GM12878 (cell line): ENCODE measurements at regions of chr14 and their contacts with region 1.

Region 1: GRCh38 chr14:77028384-77029231 is at the start of gene IRF2BPL:
- DNase-seq: peak; percentile 87
- ATAC-seq: peak; percentile 61
- H3K4me3 ChIP-seq: peak within 1 kb of the TSS; percentile 81
- H3K27ac ChIP-seq: peak within 1 kb of the TSS; percentile 98
- H3K4me1 ChIP-seq: peaks cover 38% of the 10 kb centered on the region
- H3K27me3 ChIP-seq: no peaks in the 10 kb centered on the region
- CTCF ChIP-seq: no peak
- EP300 ChIP-seq: peak in 1 of 2 experiments; percentile 29; a peak in 2 of 4 replicates
- POLR2A ChIP-seq: peak; percentile 83
- RAD21 ChIP-seq: no peak
- polyA plus RNA-seq, gene IRF2BPL: 1.2 to 1.9 TPM

Region 2: GRCh38 chr14:76282581-76282980 is 746.0 kb before region 1 on chr14:
- CTCF ChIA-PET with region 1: no interaction called
- POLR2A ChIA-PET with region 1: no interaction called
- RAD21 ChIA-PET with region 1: no interaction called
- SMC1A ChIA-PET with region 1: no interaction called
- in situ Hi-C with region 1: no loop called
- intact Hi-C with region 1: no loop called
- DNase-seq: no peak
- ATAC-seq: no peak
- H3K4me3 ChIP-seq: no peak overlapping the region
- H3K27ac ChIP-seq: no peak overlapping the region
- H3K4me1 ChIP-seq: no peaks in the 10 kb centered on the region
- H3K27me3 ChIP-seq: no peaks in the 10 kb centered on the region
- CTCF ChIP-seq: no peak
- EP300 ChIP-seq: no peak
- POLR2A ChIP-seq: no peak
- RAD21 ChIP-seq: no peak

Region 3: DNA sequence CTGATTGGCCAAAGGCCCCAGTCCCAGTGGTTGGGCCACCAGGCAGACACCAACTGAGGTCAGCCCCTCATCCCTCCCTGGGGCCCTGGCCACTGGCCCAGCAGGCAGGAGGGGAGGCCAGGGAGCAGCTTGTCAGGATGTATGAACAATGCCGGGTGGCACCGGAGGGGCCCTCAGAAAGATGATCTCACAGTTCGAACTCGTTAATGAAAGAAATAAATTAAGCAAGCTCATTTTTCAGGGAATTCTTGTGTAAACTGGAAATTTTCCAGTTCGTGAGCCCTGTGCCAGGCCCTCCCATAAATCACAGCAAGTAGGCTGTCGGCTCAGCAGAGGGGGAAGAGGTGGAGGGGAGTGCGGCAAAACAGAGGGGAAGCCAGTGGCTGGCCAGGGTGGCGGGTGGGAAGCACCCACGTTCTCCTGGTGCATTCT is 444.3 kb before region 1 on chr14:
- CTCF ChIA-PET with region 1: no interaction called
- POLR2A ChIA-PET with region 1: no interaction called
- RAD21 ChIA-PET with region 1: no interaction called
- SMC1A ChIA-PET with region 1: no interaction called
- in situ Hi-C with region 1: no loop called
- intact Hi-C with region 1: no loop called
- DNase-seq: no peak
- ATAC-seq: no peak
- H3K4me3 ChIP-seq: no peak overlapping the region
- H3K27ac ChIP-seq: no peak overlapping the region
- H3K4me1 ChIP-seq: no peaks in the 10 kb centered on the region
- H3K27me3 ChIP-seq: peaks cover 0 to 2% of the 10 kb centered on the region in 2 experiments; a peak in 1 of 4 replicates
- CTCF ChIP-seq: no peak
- EP300 ChIP-seq: no peak
- POLR2A ChIP-seq: no peak
- RAD21 ChIP-seq: no peak

Region 4: DNA sequence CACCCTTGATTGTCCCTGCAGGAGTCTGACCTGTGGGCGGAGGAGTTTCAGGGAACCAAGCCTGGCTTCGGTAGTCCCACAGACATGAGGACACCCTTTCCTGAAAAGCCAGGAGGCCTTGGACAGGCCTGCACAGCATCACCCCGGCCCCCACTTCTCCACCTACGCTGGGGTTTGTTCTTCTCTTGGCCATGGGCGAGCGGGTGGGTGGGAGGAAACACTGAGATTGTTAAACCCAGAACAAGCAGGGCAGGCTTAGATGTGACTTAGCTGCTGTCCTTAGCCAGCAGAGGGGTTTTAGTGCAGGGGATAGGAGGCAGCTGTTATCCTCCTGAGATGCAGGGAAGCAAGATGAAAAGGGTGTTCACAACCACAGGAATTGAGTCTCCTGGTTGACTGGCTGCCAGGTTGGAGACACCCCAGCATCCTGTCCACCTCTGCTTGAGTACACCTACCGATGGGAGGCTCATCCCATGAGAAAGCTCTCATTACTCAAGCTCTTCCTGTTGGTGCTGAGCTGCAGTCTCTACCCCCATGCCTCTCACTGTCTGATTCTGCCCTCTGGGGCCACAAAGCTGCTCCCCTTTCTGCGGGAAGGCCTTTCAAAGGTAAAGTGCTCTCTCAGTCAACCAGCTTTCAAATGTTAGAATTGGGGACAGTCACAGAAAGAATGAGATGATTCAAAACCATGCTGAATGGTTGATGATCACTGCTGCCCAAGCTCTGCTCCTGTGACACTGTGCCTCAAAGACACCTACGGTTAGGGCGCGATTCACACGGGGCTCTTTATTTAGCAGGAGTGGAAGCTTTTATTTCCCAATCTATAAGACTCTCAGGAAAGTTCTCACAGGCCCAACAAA is 86.4 kb before region 1 on chr14:
- CTCF ChIA-PET with region 1: interaction called, 14 read pairs
- POLR2A ChIA-PET with region 1: interaction called, 12 read pairs
- RAD21 ChIA-PET with region 1: interaction called, 20 read pairs
- SMC1A ChIA-PET with region 1: interaction called, 9 read pairs
- in situ Hi-C with region 1: no loop called
- intact Hi-C with region 1: no loop called
- DNase-seq: peak; percentile 72
- ATAC-seq: peak; percentile 29
- H3K4me3 ChIP-seq: no peak overlapping the region
- H3K27ac ChIP-seq: no peak overlapping the region
- H3K4me1 ChIP-seq: peaks cover 21% of the 10 kb centered on the region
- H3K27me3 ChIP-seq: no peaks in the 10 kb centered on the region
- CTCF ChIP-seq: no peak; a peak in 1 of 6 replicates
- EP300 ChIP-seq: no peak
- POLR2A ChIP-seq: no peak
- RAD21 ChIP-seq: no peak

Region 5: GRCh38 chr14:76956316-76957090 is 72.1 kb before region 1 on chr14:
- CTCF ChIA-PET with region 1: interaction called, 22 read pairs
- POLR2A ChIA-PET with region 1: interaction called, 48 read pairs
- RAD21 ChIA-PET with region 1: interaction called, 101 read pairs
- SMC1A ChIA-PET with region 1: interaction called, 133 read pairs
- in situ Hi-C with region 1: no loop called
- intact Hi-C with region 1: loop called (anchors 1 kb)
- DNase-seq: no peak
- ATAC-seq: peak; percentile 49
- H3K4me3 ChIP-seq: peak overlapping the region; percentile 68
- H3K27ac ChIP-seq: peak overlapping the region; percentile 100
- H3K4me1 ChIP-seq: peaks cover 73% of the 10 kb centered on the region
- H3K27me3 ChIP-seq: no peaks in the 10 kb centered on the region
- CTCF ChIP-seq: no peak
- EP300 ChIP-seq: peak; percentile 18 to 69; a peak in 2 of 4 replicates
- POLR2A ChIP-seq: peak; percentile 62
- RAD21 ChIP-seq: no peak

Region 6: DNA sequence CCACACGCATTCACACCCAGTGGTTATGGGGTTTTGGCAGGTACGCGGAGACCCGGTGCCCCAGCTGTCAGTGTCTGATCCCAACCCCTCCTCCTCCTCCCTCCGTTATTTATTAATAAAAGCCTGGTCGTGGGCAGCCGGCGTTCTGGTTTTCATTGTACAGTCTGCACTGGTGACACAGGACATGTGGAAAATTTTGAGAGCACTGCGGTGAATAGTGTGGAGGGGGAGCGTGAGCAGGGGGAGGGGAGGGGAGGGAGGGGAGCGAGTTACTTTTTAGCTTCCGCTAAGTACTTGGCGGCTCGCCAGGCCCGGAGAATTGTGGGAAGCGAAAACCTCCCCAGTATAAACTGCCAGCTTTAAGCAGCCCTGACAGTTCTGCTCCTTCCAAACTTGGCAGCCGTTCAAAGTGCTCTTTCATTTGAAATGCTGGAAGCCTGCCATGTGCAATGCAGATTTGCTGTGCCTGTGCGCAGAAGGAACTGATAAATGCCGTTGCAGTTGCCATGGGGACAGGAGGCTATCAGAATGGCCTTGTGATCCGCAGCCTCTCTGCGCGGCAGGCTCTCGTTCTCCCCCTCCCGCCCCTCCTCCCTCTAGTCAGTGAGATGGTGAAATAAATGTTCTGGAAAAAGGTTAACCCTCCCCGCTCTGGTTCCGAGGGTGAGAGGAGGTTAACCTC is 11.6 kb after region 1 on chr14:
- CTCF ChIA-PET with region 1: interaction called, 8 read pairs
- POLR2A ChIA-PET with region 1: interaction called, 151 read pairs
- RAD21 ChIA-PET with region 1: interaction called, 86 read pairs
- SMC1A ChIA-PET with region 1: interaction called, 121 read pairs
- in situ Hi-C with region 1: no loop called
- intact Hi-C with region 1: no loop called
- DNase-seq: peak; percentile 99
- ATAC-seq: peak; percentile 75
- H3K4me3 ChIP-seq: peak overlapping the region; percentile 50
- H3K27ac ChIP-seq: peak overlapping the region; percentile 93
- H3K4me1 ChIP-seq: peaks cover 87% of the 10 kb centered on the region
- H3K27me3 ChIP-seq: no peaks in the 10 kb centered on the region
- CTCF ChIP-seq: no peak
- EP300 ChIP-seq: peak; percentile 42 to 61
- POLR2A ChIP-seq: peak; percentile 55; the same call in 1 of the 2 replicates
- RAD21 ChIP-seq: no peak

Region 7: GRCh38 chr14:77141214-77142004 is 112.8 kb after region 1 on chr14 and contains the start of gene ZDHHC22:
- CTCF ChIA-PET with region 1: no interaction called
- POLR2A ChIA-PET with region 1: no interaction called
- RAD21 ChIA-PET with region 1: no interaction called
- SMC1A ChIA-PET with region 1: no interaction called
- in situ Hi-C with region 1: no loop called
- intact Hi-C with region 1: no loop called
- DNase-seq: no peak
- ATAC-seq: peak; percentile 78
- H3K4me3 ChIP-seq: no peak within 1 kb of the TSS
- H3K27ac ChIP-seq: no peak within 1 kb of the TSS
- H3K4me1 ChIP-seq: no peaks in the 10 kb centered on the region
- H3K27me3 ChIP-seq: peaks cover 19 to 20% of the 10 kb centered on the region in 2 experiments
- CTCF ChIP-seq: peak in 1 of 3 experiments; percentile 36; a peak in 1 of 6 replicates
- EP300 ChIP-seq: no peak
- POLR2A ChIP-seq: no peak
- RAD21 ChIP-seq: no peak
- polyA plus RNA-seq, gene ZDHHC22: not detected